Activated naive CD4-positive, alpha-beta T cell treated with anti-CD3 and anti-CD28 coated beads for 36 hours (primary cell): ENCODE measurements at regions of chr13 and their contacts with region 1.

Region 1: DNA sequence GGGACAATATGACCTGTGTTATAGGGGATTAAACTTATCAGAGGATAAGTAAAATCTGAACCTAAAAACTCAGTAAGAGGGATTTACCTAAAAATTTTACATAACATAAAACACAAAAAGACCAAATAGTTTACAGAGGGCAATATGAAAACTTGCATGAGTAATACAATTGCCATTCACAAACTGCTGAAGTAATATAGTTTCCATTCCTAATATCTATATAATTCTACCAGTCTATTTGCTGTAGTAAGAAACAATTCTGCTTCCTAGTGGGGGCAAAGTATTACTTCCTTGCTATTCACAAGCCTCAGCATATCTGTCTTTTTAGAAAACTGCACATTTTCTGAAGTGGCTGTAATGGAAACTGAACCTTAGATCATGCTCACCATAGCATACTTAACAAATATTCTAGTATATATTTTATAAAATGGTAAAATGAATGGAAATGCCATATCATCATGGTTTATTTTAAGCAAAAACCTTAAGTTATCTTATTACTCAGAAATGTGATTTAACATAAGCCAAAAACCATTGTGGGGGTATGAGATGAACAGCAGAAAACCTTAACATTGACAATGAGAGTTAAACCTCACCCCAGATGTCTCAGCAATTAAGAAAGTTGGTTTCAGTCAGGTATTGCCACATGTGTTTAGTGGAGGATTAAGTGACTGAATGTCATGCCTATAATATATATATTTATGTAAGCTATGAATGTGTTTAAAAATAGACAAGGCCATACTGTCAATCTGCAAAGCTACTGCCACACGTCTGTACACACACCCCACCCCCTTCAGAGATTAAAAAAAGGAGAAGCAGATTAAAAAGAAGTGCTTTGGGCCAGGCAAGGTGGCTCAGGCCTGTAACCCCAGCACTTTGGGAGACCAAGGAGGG is 136.8 kb downstream of the MIPEP start:
- DNase-seq: no peak
- H3K4me3 Mint-ChIP-seq: no peak overlapping the region
- H3K27ac Mint-ChIP-seq: no peak overlapping the region
- H3K4me1 Mint-ChIP-seq: peaks cover 31% of the 10 kb centered on the region
- H3K27me3 Mint-ChIP-seq: no peaks in the 10 kb centered on the region

Region 2: DNA sequence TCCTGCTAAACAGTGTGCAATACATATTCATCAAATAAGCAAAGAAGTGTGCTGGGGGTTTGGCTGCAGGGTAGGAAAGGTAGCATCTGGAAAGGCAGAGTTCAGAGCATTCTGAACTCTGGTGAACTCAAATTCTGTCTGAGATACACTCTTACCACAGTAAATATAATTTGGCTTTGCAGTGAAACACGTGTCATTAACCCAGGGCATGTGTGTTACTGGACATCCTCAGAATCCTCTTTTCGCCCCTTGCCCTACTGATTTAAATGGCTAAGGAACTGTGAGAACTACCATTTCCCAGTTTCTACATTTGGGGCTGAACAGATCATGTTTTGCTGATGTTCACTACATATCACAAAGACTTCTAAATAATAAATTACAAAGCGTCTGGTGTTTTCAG is 1134.4 kb before region 1 on chr13:
- CTCF ChIA-PET with region 1: no interaction called
- intact Hi-C with region 1: no loop called
- DNase-seq: no peak
- H3K4me3 Mint-ChIP-seq: no peak overlapping the region
- H3K27ac Mint-ChIP-seq: no peak overlapping the region
- H3K4me1 Mint-ChIP-seq: no peaks in the 10 kb centered on the region
- H3K27me3 Mint-ChIP-seq: no peaks in the 10 kb centered on the region

Region 3: GRCh38 chr13:23506807-23507291 is 245.5 kb before region 1 on chr13:
- CTCF ChIA-PET with region 1: no interaction called
- intact Hi-C with region 1: no loop called
- DNase-seq: no peak
- H3K4me3 Mint-ChIP-seq: no peak overlapping the region
- H3K27ac Mint-ChIP-seq: no peak overlapping the region
- H3K4me1 Mint-ChIP-seq: no peaks in the 10 kb centered on the region
- H3K27me3 Mint-ChIP-seq: peaks cover 8% of the 10 kb centered on the region

Region 4: DNA sequence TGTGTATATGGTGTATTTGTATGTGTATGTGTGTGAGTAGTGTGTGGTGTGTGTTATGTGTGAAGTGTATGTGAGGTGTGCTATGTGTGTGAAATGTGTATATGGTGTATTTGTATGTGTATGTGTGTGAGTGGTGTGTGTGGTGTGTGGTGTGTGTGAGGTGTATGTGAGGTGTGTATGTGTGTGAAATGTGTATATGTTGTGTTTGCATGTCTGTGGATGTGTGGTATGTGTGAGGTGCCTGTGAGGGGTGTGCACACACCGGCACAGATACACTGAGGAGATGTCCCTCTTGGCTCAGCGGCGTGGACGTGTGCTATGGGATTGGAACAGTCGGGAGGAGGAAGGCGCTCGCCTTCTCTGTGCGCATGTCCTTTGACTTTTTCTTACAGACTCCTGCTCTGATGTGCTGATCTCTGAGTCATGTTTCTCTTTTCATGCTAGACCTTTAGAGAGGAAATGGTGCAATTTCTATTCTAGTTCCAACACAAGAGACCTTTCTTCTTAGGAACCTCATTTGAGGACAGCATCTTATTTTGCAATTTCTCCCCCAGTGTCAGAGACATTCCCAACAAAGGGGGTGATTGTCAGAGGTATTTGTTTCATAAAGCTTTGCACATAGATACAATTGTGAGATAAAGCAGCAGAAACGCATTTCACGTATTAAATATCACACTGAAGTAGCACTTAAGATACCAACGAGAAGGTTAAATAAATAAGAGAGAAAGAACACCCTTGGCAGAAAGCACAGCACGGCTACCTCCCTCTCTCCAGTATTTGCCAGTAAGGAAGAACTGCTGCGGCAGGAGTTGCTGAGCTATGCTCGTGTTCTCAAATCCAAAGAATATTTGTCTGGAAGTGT is 193.4 kb before region 1 on chr13:
- CTCF ChIA-PET with region 1: no interaction called
- intact Hi-C with region 1: loop called (anchors 5 kb)
- DNase-seq: peak; percentile 45
- H3K4me3 Mint-ChIP-seq: no peak overlapping the region
- H3K27ac Mint-ChIP-seq: no peak overlapping the region
- H3K4me1 Mint-ChIP-seq: peaks cover 2% of the 10 kb centered on the region
- H3K27me3 Mint-ChIP-seq: peaks cover 6% of the 10 kb centered on the region

Region 5: DNA sequence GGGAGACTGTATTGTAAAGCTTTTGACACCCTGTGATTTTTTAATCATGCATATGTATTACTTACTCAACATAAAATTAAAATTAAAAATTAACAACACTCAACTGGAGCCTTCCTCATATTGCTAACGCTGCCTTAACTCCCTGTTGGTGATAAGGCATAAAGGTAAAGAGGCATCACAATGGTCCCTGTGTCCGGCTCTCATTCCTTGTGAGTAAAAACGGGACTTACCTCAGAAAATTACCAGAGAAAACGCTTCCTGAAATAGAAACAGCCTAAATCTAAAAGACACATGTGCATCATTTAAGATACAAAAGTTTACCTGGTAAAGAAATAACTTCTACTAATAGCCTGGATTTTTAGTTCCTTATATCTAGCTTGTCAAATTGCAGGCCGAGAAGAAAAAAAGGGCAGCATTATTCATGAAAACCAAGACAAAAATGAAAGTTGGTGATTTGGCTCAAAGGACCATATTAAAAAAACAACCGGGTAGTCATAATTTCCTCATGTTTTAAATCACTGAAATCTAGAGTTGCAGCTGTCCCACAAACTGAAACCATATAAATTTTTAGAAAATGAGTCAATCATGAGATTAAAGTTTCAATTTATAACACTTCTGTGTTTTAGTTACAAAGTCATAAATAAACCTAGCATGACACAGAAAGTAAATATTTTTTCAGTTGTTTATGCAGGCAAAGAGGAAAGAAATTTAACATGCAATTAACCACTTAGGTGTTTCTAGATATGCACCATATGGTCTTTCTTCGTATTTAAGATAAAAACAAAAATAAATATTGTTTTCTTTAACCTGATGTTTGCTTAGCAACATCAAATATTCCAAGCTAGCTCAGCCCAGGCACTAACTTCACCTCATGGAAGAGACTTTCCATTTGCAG is 42.2 kb after region 1 on chr13:
- CTCF ChIA-PET with region 1: no interaction called
- intact Hi-C with region 1: loop called (anchors 1 kb)
- DNase-seq: no peak
- H3K4me3 Mint-ChIP-seq: no peak overlapping the region
- H3K27ac Mint-ChIP-seq: no peak overlapping the region
- H3K4me1 Mint-ChIP-seq: peaks cover 10% of the 10 kb centered on the region
- H3K27me3 Mint-ChIP-seq: no peaks in the 10 kb centered on the region

Region 6: GRCh38 chr13:23915308-23915707 is 163.0 kb after region 1 on chr13:
- CTCF ChIA-PET with region 1: no interaction called
- intact Hi-C with region 1: no loop called
- DNase-seq: no peak
- H3K4me3 Mint-ChIP-seq: no peak overlapping the region
- H3K27ac Mint-ChIP-seq: no peak overlapping the region
- H3K4me1 Mint-ChIP-seq: peaks cover 8% of the 10 kb centered on the region
- H3K27me3 Mint-ChIP-seq: peaks cover 30% of the 10 kb centered on the region

Region 7: GRCh38 chr13:23960566-23961156 is 208.3 kb after region 1 on chr13:
- CTCF ChIA-PET with region 1: no interaction called
- intact Hi-C with region 1: loop called (anchors 10 kb)
- DNase-seq: peak; percentile 40
- H3K4me3 Mint-ChIP-seq: no peak overlapping the region
- H3K27ac Mint-ChIP-seq: no peak overlapping the region
- H3K4me1 Mint-ChIP-seq: peaks cover 16% of the 10 kb centered on the region
- H3K27me3 Mint-ChIP-seq: no peaks in the 10 kb centered on the region